Aorta (tissue), 5 donors: ENCODE measurements at regions of chr17 and their contacts with region 1.

Region 1: DNA sequence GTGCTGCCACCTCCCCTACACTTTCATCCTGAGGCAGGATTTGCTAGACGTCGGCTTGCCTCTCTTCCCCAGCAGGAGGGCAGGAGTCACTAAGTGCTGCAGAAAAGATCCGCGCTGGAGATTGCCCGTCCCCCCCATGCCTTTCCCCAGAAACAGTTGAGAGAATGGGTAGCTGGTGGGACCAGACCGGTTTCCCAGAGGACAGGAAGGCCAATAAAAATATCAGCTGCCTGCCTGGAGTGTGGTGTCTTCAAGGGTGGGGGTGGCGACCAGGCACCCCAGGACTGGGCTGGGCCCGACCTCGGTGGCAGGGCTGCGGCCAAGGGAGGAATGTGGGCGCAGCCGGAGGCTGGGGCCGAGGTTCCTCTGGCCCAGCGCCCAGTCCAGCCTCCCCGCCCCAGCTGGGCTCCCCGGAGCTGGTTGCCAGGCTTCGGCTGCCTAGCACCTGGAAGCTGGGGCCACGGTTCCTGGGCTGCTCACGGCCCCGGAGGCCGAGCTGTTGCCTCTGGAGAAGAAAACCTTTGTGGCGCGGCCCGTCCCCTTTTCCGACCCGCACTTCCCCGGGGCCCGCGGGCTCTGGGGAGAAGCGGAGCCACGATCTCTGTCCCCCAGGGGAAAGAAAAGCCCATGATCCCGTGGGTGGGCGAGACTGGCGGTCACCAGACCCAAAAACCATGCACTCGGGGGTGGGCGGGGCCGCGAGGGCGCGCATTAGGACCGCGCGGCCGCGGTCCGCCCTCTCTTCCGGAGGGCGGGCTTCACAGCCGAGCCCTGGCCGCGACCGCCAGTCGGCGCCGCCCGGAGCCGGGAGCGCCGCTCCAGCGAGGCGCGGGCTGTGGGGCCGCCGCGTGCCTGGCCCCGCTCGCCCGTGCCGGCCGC is at the start of gene TRAF4:
- DNase-seq: peak; percentile 85 to 92
- ATAC-seq: peak; percentile 91
- H3K4me3 ChIP-seq: peak within 1 kb of the TSS; percentile 59 to 71
- H3K27ac ChIP-seq: peak within 1 kb of the TSS in 1 of 2 donors; percentile 81
- H3K4me1 ChIP-seq: no peaks in the 10 kb centered on the region
- H3K27me3 ChIP-seq: no peaks in the 10 kb centered on the region
- total RNA-seq, gene TRAF4: 18.8 to 24.6 TPM

Region 2: GRCh38 chr17:28710861-28711722 is 32.4 kb before region 1 on chr17:
- intact Hi-C with region 1: no loop called
- DNase-seq: peak; percentile 93 to 96
- ATAC-seq: peak; percentile 96
- H3K4me3 ChIP-seq: peak overlapping the region; percentile 1 to 12
- H3K27ac ChIP-seq: peak overlapping the region in 1 of 2 donors; percentile 75
- H3K4me1 ChIP-seq: no peaks in the 10 kb centered on the region
- H3K27me3 ChIP-seq: no peaks in the 10 kb centered on the region

Region 3: GRCh38 chr17:28726226-28727130 is 17.0 kb before region 1 on chr17 and contains the start of gene TLCD1:
- intact Hi-C with region 1: loop called (anchors 1 kb)
- DNase-seq: peak; percentile 95 to 97
- ATAC-seq: peak; percentile 93
- H3K4me3 ChIP-seq: peak within 1 kb of the TSS; percentile 15 to 52
- H3K27ac ChIP-seq: peak within 1 kb of the TSS in 1 of 2 donors; percentile 20
- H3K4me1 ChIP-seq: no peaks in the 10 kb centered on the region
- H3K27me3 ChIP-seq: no peaks in the 10 kb centered on the region
- total RNA-seq, gene TLCD1: 0.90 to 2.5 TPM